ENCODE measurements at regions of chr6 and their contacts with region 1.

Region 1: GRCh38 chr6:35146453-35146852 is 5.3 kb upstream of the TCP11 start:
- DNase-seq: peak; percentile 65
- H3K4me3 Mint-ChIP-seq: no peak overlapping the region
- H3K27ac Mint-ChIP-seq: no peak overlapping the region
- H3K4me1 Mint-ChIP-seq: peaks cover 17% of the 10 kb centered on the region
- H3K27me3 Mint-ChIP-seq: no peaks in the 10 kb centered on the region
- CTCF ChIP-seq: peak; percentile 49

Region 2: DNA sequence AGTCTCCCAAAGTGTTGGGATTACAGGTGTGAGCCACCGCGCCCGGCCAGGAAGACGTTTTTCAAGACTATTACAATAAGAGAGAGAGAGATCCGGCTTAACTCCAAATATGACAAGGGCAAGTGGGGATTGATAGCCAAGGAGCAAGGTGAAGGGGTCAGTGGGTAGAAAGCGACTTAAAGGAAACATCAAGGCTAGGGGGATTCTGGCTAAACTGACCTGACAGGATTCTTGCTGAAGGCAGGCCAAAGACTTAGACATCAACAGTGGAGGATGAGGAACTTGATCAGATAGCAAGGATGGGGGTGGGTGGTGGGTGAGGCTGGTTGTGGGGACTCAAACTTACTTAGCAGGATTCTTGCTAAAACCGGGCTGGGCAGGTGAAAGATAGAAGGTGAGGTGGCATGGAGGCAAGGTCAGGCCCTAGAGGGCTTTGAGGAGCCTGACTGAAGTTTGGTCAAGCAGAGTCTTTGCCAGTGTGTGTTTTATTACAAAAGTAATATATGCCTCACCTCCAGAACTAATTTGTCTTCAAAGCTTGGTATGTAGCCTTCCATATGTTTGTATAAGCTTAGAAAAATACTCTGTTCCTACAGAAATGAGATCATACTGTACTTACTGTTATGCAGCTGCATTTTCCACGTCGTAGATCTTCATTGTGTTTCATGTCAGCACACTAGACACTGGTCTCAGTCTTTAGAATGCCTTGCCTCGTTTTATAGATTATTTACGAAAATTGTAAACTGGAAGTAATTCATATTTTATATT is 195.8 kb before region 1 on chr6:
- CTCF ChIA-PET with region 1: no interaction called
- POLR2A ChIA-PET with region 1: no interaction called
- intact Hi-C with region 1: no loop called
- DNase-seq: no peak
- H3K4me3 Mint-ChIP-seq: no peak overlapping the region
- H3K27ac Mint-ChIP-seq: no peak overlapping the region
- H3K4me1 Mint-ChIP-seq: peaks cover 13% of the 10 kb centered on the region
- H3K27me3 Mint-ChIP-seq: no peaks in the 10 kb centered on the region
- CTCF ChIP-seq: no peak

Region 3: GRCh38 chr6:35161776-35162607 is 15.5 kb after region 1 on chr6:
- CTCF ChIA-PET with region 1: interaction called, 15 read pairs
- POLR2A ChIA-PET with region 1: interaction called, 3 read pairs
- intact Hi-C with region 1: no loop called
- DNase-seq: no peak
- H3K4me3 Mint-ChIP-seq: no peak overlapping the region
- H3K27ac Mint-ChIP-seq: no peak overlapping the region
- H3K4me1 Mint-ChIP-seq: peaks cover 8% of the 10 kb centered on the region
- H3K27me3 Mint-ChIP-seq: no peaks in the 10 kb centered on the region
- CTCF ChIP-seq: no peak

Region 4: DNA sequence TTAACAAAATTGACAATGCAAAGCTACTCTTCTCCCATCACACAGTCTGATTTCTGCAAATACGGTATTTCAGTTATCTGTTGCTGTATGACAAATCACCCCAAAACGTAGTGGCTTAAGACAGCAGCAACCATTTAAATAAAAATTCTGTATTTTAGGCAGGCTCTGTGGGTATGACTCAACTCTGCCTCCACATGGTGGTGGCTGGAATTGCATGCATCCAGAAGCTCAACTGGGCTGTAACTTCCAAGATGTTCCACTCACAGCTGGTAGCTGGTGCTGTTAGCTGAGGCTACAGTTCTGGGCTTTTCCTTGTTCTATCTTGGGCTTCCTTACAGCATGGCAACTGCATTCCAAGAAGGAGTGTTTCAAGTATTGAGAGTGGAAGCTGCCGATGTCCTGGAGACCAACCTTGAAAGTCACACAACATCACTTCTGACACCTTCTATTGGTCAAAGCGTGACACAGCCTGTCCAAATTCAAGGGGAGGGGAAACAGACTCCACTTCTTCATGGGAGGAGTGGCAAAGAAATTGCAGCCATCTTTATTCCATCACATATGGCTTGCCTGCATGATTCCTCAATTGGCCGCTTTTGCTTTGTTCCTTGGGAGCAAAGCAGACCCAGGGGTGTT is 405.9 kb after region 1 on chr6:
- CTCF ChIA-PET with region 1: no interaction called
- POLR2A ChIA-PET with region 1: no interaction called
- intact Hi-C with region 1: no loop called
- DNase-seq: no peak
- H3K4me3 Mint-ChIP-seq: no peak overlapping the region
- H3K27ac Mint-ChIP-seq: no peak overlapping the region
- H3K4me1 Mint-ChIP-seq: no peaks in the 10 kb centered on the region
- H3K27me3 Mint-ChIP-seq: no peaks in the 10 kb centered on the region
- CTCF ChIP-seq: peak; percentile 89